PC-3 (cell line): ENCODE measurements at regions of chr3 and their contacts with region 1.

Region 1: GRCh38 chr3:43223670-43224364 is 62.5 kb upstream of the SNRK start:
- DNase-seq: no peak
- ATAC-seq: peak; percentile 42; the same call in 1 of the 2 replicates
- H3K4me3 ChIP-seq: no peak overlapping the region
- H3K27ac ChIP-seq: no peak overlapping the region
- H3K4me1 ChIP-seq: no peaks in the 10 kb centered on the region
- H3K27me3 ChIP-seq: no peaks in the 10 kb centered on the region
- CTCF ChIP-seq: peak; percentile 54

Region 2: DNA sequence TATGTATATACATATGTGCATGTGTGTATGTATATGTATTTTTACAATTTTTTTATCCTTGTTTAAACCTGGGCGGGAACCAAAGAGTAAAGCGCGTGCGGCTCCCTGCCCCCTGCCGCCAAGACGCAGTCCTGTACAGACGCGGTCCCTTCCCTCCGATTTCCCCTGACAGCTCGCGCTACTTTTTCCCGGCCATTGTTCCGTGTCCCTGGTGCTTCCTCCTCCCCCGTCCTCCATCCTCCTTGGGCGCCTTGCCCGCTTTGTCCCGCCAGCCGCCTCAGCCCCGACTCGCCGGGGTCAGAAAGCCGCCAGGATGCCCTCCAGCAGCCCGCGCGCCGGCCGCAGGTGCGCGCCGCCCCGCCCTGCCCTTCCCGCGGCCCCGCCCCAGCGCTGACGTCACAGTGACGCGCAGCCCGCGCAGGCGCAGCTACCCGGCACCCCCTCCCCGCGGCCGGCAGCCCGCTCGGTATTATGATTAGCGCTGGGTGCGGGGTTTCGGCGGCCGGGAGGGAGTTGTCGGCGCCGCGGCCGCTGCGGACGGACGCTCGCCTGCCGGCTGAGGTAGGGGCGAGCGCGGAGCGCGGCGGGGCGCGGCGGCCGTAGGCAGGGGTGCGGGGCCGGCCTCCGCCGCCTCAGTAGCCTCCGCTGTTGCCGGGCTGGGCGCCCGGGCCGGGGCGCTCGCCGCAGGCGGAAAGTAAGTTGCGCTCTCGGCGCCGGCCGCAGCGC is 62.5 kb after region 1 on chr3 and contains the start of gene SNRK:
- CTCF ChIA-PET with region 1: no interaction called
- POLR2A ChIA-PET with region 1: no interaction called
- intact Hi-C with region 1: loop called (anchors 2 kb)
- DNase-seq: peak; percentile 89
- ATAC-seq: peak; percentile 69
- H3K4me3 ChIP-seq: peak within 1 kb of the TSS; percentile 85
- H3K27ac ChIP-seq: peak within 1 kb of the TSS; percentile 60
- H3K4me1 ChIP-seq: peaks cover 36% of the 10 kb centered on the region
- H3K27me3 ChIP-seq: no peaks in the 10 kb centered on the region
- CTCF ChIP-seq: no peak; the same call in 1 of the 2 replicates
- total RNA-seq, gene SNRK: 53.3 and 53.4 TPM in 2 replicates

Region 3: DNA sequence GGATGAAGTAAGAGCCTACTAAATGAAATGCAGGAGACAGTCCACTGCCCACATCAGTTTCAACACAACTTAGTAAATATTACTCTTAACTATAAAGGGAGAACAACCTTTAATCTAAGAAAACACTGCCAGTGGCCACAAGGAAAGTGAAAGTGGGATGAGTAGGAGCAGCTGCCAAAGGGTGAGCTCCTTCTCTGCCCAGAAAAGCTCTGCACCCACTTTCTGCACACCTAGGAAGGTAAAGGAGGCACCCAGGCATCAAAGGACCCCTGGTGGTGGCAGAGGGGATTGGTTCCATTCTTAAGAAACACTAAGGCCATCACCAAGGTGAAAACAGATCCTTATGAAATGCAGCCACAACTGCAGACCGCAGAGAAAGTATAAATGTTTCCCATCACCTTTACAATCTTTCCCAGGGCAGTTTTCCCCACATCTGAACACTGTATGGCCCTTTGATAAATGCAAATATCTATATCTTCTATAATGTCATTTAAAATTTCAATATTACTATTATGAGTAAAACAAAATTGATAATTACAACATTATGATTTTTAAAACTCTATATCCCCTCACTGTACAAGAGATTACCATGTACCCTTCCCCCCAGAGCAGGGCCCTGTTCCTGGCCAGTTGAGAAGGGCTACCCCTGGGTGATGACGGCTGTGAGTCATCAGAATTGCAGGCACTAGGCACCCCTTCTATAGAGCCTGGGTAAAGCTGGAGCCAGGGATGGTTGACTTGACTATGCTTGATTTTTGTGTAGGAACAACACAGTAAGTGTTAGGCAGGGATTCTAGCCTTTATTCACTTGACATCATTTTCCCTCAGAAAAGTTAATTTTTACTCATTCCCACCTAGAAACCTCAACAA is 154.5 kb after region 1 on chr3:
- CTCF ChIA-PET with region 1: interaction called, 7 read pairs
- POLR2A ChIA-PET with region 1: no interaction called
- intact Hi-C with region 1: loop called (anchors 10 kb)
- DNase-seq: peak; percentile 71
- ATAC-seq: peak; percentile 87
- H3K4me3 ChIP-seq: no peak overlapping the region
- H3K27ac ChIP-seq: no peak overlapping the region
- H3K4me1 ChIP-seq: peaks cover 5% of the 10 kb centered on the region; the same call in 1 of the 2 replicates
- H3K27me3 ChIP-seq: no peaks in the 10 kb centered on the region
- CTCF ChIP-seq: peak; percentile 81